Caco-2 (cell line): ENCODE measurements at regions of chr12 and their contacts with region 1.

Region 1: GRCh38 chr12:54324617-54325441 is at the start of gene COPZ1:
- DNase-seq: peak; percentile 95 to 98
- H3K4me3 ChIP-seq: peak within 1 kb of the TSS; percentile 74
- H3K4me3 Mint-ChIP-seq: peak within 1 kb of the TSS; percentile 96
- H3K27ac Mint-ChIP-seq: peak within 1 kb of the TSS; percentile 98
- H3K4me1 ChIP-seq: peaks cover 17% of the 10 kb centered on the region
- H3K4me1 Mint-ChIP-seq: peaks cover 16% of the 10 kb centered on the region
- H3K27me3 ChIP-seq: no peaks in the 10 kb centered on the region
- H3K27me3 Mint-ChIP-seq: no peaks in the 10 kb centered on the region
- CTCF ChIP-seq: peak; percentile 61 to 72
- total RNA-seq, gene COPZ1: 129 and 133 TPM in 2 replicates

Region 2: DNA sequence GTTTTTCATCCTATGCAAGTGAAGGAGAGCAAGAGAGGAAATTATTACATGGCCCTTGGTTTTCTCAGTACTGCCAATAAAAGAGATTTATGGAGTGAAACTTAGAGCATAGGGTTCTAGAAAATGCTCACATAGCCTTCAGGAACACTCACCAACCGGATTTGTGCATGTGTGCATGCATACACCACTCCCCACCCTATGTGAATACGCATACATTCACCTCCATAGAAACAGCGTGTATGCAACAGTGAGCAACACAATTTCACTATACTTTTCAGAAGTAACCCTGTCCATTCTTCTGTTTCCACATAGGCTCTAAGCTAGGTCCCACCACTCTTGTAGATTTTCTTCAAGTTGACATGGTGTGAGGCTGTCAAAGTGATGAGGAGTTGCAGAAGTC is 417.7 kb before region 1 on chr12:
- CTCF ChIA-PET with region 1: no interaction called
- POLR2A ChIA-PET with region 1: no interaction called
- intact Hi-C with region 1: no loop called
- DNase-seq: no peak
- H3K4me3 ChIP-seq: no peak overlapping the region
- H3K4me3 Mint-ChIP-seq: no peak overlapping the region
- H3K27ac Mint-ChIP-seq: no peak overlapping the region
- H3K4me1 ChIP-seq: no peaks in the 10 kb centered on the region
- H3K4me1 Mint-ChIP-seq: no peaks in the 10 kb centered on the region
- H3K27me3 ChIP-seq: no peaks in the 10 kb centered on the region
- H3K27me3 Mint-ChIP-seq: peaks cover 8% of the 10 kb centered on the region
- CTCF ChIP-seq: no peak

Region 3: DNA sequence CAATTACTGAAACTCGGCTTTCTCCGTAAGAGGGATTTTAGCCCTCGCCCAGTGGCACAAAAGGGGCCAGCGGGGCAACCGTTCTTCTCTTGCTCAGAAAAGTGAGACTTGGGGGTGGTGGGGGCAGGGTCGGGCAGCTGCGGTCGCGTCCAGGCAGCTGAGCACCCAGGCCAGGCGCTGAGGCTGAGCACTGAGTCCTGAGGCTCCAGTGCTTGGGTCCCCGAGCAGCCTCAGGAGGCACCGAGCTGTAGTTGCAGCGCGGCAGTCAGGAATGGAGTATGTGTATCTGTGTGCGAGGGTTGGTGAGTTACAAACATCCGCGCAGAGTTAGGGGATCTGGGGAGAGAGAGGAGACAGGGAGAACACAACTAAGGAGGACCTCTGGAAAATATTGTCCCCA is 300.7 kb before region 1 on chr12:
- CTCF ChIA-PET with region 1: no interaction called
- POLR2A ChIA-PET with region 1: no interaction called
- intact Hi-C with region 1: no loop called
- DNase-seq: no peak
- H3K4me3 ChIP-seq: no peak overlapping the region
- H3K4me3 Mint-ChIP-seq: no peak overlapping the region
- H3K27ac Mint-ChIP-seq: no peak overlapping the region
- H3K4me1 ChIP-seq: 0 out of 2 replicates have a peak, but pooled peaks cover 4% of the 10 kb centered on the region
- H3K4me1 Mint-ChIP-seq: peaks cover 26% of the 10 kb centered on the region
- H3K27me3 ChIP-seq: no peaks in the 10 kb centered on the region
- H3K27me3 Mint-ChIP-seq: no peaks in the 10 kb centered on the region
- CTCF ChIP-seq: no peak

Region 4: GRCh38 chr12:54251667-54252284 is 73.1 kb before region 1 on chr12:
- CTCF ChIA-PET with region 1: interaction called, 21 read pairs
- POLR2A ChIA-PET with region 1: interaction called, 4 read pairs
- intact Hi-C with region 1: loop called (anchors 1 kb)
- DNase-seq: peak in 1 of 2 experiments; percentile 37
- H3K4me3 ChIP-seq: no peak overlapping the region
- H3K4me3 Mint-ChIP-seq: no peak overlapping the region
- H3K27ac Mint-ChIP-seq: no peak overlapping the region
- H3K4me1 ChIP-seq: no peaks in the 10 kb centered on the region
- H3K4me1 Mint-ChIP-seq: no peaks in the 10 kb centered on the region
- H3K27me3 ChIP-seq: no peaks in the 10 kb centered on the region
- H3K27me3 Mint-ChIP-seq: no peaks in the 10 kb centered on the region
- CTCF ChIP-seq: peak; percentile 62 to 69

Region 5: GRCh38 chr12:54279866-54280467 is 44.9 kb before region 1 on chr12 and contains the start of gene CBX5:
- CTCF ChIA-PET with region 1: interaction called, 40 read pairs
- POLR2A ChIA-PET with region 1: interaction called, 99 read pairs
- intact Hi-C with region 1: loop called (anchors 1 kb)
- DNase-seq: peak; percentile 98 to 99
- H3K4me3 ChIP-seq: peak within 1 kb of the TSS; percentile 80
- H3K4me3 Mint-ChIP-seq: no peak within 1 kb of the TSS
- H3K27ac Mint-ChIP-seq: no peak within 1 kb of the TSS
- H3K4me1 ChIP-seq: peaks cover 32% of the 10 kb centered on the region
- H3K4me1 Mint-ChIP-seq: peaks cover 12% of the 10 kb centered on the region
- H3K27me3 ChIP-seq: no peaks in the 10 kb centered on the region
- H3K27me3 Mint-ChIP-seq: no peaks in the 10 kb centered on the region
- CTCF ChIP-seq: no peak
- total RNA-seq, gene CBX5: 85.2 and 85.5 TPM in 2 replicates

Region 6: DNA sequence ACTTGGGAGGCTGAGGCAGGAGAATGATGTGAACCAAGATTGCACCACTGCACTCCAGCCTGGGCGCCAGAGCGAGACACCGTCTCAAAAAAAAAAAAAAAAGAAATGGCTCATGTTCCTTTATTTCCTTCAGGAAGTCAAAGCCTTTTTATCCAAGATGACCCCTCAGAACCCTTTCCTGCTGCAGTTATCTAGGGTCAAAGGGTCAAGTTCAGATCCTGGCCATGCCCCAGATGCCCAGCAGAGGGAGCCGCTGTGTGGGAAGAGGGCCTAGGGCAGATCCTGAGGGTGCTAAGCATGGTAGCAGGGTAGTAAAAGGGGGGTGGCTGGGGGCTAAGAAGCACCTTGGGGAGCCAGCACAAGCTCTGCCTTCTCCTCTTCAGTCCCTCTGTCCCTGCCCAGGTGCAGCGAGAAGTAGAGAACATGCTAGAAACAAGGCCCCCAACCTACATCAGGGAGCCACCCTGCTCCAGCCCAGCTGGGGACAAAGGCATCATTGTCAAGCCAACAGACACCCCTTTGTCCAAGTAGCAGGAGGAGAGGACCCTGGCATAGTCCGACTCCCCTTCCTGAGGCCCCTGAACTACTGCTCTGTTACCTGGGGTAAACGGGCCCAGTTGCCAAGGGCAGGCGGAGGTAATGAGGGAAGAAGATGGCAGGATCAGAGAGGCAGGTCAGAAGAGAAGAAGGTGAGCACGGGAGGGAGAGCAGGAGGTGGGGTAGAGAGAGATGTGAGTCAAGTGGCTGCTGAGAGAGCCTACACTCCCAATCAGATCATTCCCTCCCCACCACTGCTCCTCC is 30.5 kb before region 1 on chr12:
- CTCF ChIA-PET with region 1: interaction called, 56 read pairs
- POLR2A ChIA-PET with region 1: interaction called, 26 read pairs
- intact Hi-C with region 1: loop called (anchors 1 kb)
- DNase-seq: peak; percentile 65 to 78
- H3K4me3 ChIP-seq: no peak overlapping the region
- H3K4me3 Mint-ChIP-seq: no peak overlapping the region
- H3K27ac Mint-ChIP-seq: no peak overlapping the region
- H3K4me1 ChIP-seq: 0 out of 2 replicates have a peak, but pooled peaks cover 7% of the 10 kb centered on the region
- H3K4me1 Mint-ChIP-seq: peaks cover 6% of the 10 kb centered on the region
- H3K27me3 ChIP-seq: no peaks in the 10 kb centered on the region
- H3K27me3 Mint-ChIP-seq: no peaks in the 10 kb centered on the region
- CTCF ChIP-seq: peak; percentile 83 to 88

Region 7: GRCh38 chr12:54337280-54337842 is 12.5 kb after region 1 on chr12:
- CTCF ChIA-PET with region 1: interaction called, 41 read pairs
- POLR2A ChIA-PET with region 1: interaction called, 6 read pairs
- intact Hi-C with region 1: no loop called
- DNase-seq: peak in 1 of 2 experiments; percentile 55
- H3K4me3 ChIP-seq: no peak overlapping the region
- H3K4me3 Mint-ChIP-seq: no peak overlapping the region
- H3K27ac Mint-ChIP-seq: no peak overlapping the region
- H3K4me1 ChIP-seq: peaks cover 38% of the 10 kb centered on the region
- H3K4me1 Mint-ChIP-seq: peaks cover 31% of the 10 kb centered on the region
- H3K27me3 ChIP-seq: no peaks in the 10 kb centered on the region
- H3K27me3 Mint-ChIP-seq: no peaks in the 10 kb centered on the region
- CTCF ChIP-seq: peak in 1 of 2 experiments; percentile 6

Region 8: DNA sequence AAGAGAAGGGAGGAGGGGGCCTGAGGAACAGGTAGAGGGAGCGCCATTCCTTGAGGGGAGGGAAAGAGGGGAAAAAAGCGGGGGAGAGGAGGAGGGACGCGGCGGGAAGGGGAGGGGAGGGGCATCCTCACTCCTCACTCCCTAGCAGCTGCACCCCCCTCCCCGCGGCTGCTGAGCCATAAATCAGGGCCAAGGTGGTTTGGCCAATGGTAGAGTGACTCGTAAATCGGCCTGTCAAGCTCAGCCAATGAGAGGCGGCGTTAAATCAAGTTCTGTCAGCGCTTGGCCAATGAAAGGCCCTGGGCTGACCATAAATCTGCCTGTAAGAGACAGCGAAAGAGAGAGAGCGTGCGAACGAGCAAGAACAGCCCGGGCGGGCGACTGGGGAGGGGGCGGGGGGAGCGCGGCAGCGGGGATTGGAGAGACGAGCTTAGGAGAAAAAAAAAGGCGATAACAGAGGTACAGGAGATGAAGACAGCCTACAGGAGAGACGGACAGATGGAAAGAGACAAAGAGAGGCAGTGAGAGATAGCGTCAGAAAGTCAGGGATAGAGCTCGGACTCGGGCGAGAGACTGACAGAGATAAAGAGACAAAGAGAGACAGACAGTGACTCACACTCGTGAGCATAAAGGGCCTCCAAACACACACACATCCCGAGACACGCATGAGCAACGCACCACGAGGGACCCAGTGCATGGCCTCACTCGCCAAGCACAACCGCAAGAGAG is 34.4 kb after region 1 on chr12:
- CTCF ChIA-PET with region 1: interaction called, 44 read pairs
- POLR2A ChIA-PET with region 1: interaction called, 7 read pairs
- intact Hi-C with region 1: loop called (anchors 1 kb)
- DNase-seq: peak; percentile 96 to 99
- H3K4me3 ChIP-seq: peak overlapping the region; percentile 70
- H3K4me3 Mint-ChIP-seq: no peak overlapping the region
- H3K27ac Mint-ChIP-seq: no peak overlapping the region
- H3K4me1 ChIP-seq: peaks cover 11% of the 10 kb centered on the region
- H3K4me1 Mint-ChIP-seq: peaks cover 7% of the 10 kb centered on the region
- H3K27me3 ChIP-seq: no peaks in the 10 kb centered on the region
- H3K27me3 Mint-ChIP-seq: no peaks in the 10 kb centered on the region
- CTCF ChIP-seq: no peak

Region 9: GRCh38 chr12:54379401-54380201 is 54.8 kb after region 1 on chr12:
- CTCF ChIA-PET with region 1: interaction called, 18 read pairs
- POLR2A ChIA-PET with region 1: no interaction called
- intact Hi-C with region 1: no loop called
- DNase-seq: peak; percentile 89 to 95
- H3K4me3 ChIP-seq: peak overlapping the region; percentile 39
- H3K4me3 Mint-ChIP-seq: peak overlapping the region; percentile 81
- H3K27ac Mint-ChIP-seq: no peak overlapping the region
- H3K4me1 ChIP-seq: no peaks in the 10 kb centered on the region
- H3K4me1 Mint-ChIP-seq: no peaks in the 10 kb centered on the region
- H3K27me3 ChIP-seq: no peaks in the 10 kb centered on the region
- H3K27me3 Mint-ChIP-seq: no peaks in the 10 kb centered on the region
- CTCF ChIP-seq: peak; percentile 99 to 100